CD4-positive, alpha-beta memory T cell (primary cell): ENCODE measurements at regions of chr15 and their contacts with region 1.

Region 1: GRCh38 chr15:60649845-60650548 is 171.1 kb upstream of the ICE2 start:
- DNase-seq: peak; percentile 73 to 85 (median 81)
- H3K4me3 ChIP-seq: peak overlapping the region in 1 of 2 donors; percentile 46
- H3K4me3 Mint-ChIP-seq: peak overlapping the region; percentile 67 to 92 (median 85)
- H3K27ac ChIP-seq: peak overlapping the region; percentile 66
- H3K27ac Mint-ChIP-seq: peak overlapping the region; percentile 93 to 99 (median 97)
- H3K4me1 ChIP-seq: peaks cover 46% of the 10 kb centered on the region
- H3K4me1 Mint-ChIP-seq: peaks cover 36 to 55% (median 47%) of the 10 kb centered on the region in 4 donors
- H3K27me3 ChIP-seq: no peaks in the 10 kb centered on the region
- H3K27me3 Mint-ChIP-seq: no peaks in the 10 kb centered on the region

Region 2: DNA sequence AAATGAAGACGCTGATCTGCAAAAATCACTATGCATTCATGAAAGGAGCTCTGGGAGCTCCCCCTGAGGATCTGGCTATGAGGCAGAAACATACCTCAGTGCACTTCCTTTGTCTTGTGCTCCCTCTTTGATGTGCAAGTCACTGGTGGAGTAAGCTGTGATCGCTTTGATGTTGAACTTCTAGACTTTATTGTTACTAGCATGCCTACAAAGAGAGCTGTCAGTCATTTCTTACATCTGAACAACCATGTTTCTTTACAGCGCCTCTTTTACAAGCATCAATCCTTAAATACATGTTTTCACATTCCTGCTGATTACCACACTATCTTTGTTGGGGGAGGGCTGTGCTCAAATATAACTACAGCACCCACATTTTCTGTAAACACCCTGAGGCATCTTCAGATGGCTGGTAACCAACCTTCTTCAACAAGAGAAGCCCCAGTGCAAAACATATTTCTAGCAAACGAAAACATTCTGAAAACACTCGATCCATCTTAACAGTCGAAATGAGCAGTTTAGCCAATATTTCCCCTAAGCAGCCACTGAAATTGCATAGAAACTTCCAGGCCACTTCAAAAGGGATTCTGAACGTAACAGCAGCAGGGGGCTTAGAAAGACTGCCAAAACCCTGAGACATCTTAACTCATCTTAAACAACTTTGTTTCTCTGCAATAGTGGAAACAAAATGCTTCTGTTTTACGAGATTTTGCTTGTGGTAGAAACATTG is 69.2 kb before region 1 on chr15:
- CTCF ChIA-PET with region 1: interaction called, 6 read pairs
- POLR2A ChIA-PET with region 1: interaction called, 12 read pairs
- intact Hi-C with region 1: loop called (anchors 2 kb)
- DNase-seq: peak; percentile 74 to 88 (median 83)
- H3K4me3 ChIP-seq: peak overlapping the region in 1 of 2 donors; percentile 16
- H3K4me3 Mint-ChIP-seq: peak overlapping the region; percentile 73 to 89 (median 82)
- H3K27ac ChIP-seq: peak overlapping the region; percentile 92
- H3K27ac Mint-ChIP-seq: peak overlapping the region; percentile 92 to 98 (median 97)
- H3K4me1 ChIP-seq: peaks cover 99% of the 10 kb centered on the region
- H3K4me1 Mint-ChIP-seq: peaks cover 73 to 96% (median 85%) of the 10 kb centered on the region in 4 donors
- H3K27me3 ChIP-seq: no peaks in the 10 kb centered on the region
- H3K27me3 Mint-ChIP-seq: no peaks in the 10 kb centered on the region

Region 3: GRCh38 chr15:60889006-60889405 is 239.0 kb after region 1 on chr15:
- CTCF ChIA-PET with region 1: no interaction called
- POLR2A ChIA-PET with region 1: no interaction called
- intact Hi-C with region 1: no loop called
- DNase-seq: no peak
- H3K4me3 ChIP-seq: no peak overlapping the region
- H3K4me3 Mint-ChIP-seq: no peak overlapping the region
- H3K27ac ChIP-seq: no peak overlapping the region
- H3K27ac Mint-ChIP-seq: no peak overlapping the region
- H3K4me1 ChIP-seq: no peaks in the 10 kb centered on the region
- H3K4me1 Mint-ChIP-seq: peaks cover 0 to 2% (median 0%) of the 10 kb centered on the region in 4 donors
- H3K27me3 ChIP-seq: no peaks in the 10 kb centered on the region
- H3K27me3 Mint-ChIP-seq: no peaks in the 10 kb centered on the region